ENCODE measurements at regions of chr16 and their contacts with region 1.

Region 1: DNA sequence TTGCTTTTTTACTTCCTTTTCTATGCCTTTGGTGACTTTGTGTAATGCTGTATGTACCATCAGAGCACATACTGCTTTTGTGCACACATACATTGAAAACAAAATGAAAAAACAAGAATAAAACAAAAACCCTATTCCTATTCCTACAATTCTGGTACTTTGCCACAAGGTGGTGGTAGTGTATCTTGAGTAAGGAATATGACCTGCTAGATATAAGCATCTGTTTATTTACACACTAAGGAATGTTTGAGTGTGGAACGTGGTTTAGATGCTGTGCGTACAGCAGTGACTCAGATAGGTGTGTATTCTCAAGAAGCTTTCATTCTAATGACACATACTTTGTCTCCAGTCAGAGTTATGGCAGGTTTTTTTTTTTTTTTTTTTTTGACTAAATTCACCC is 606.2 kb downstream of the WWOX start:
- DNase-seq: no peak
- ATAC-seq: no peak
- H3K4me3 Mint-ChIP-seq: no peak overlapping the region
- H3K27ac Mint-ChIP-seq: no peak overlapping the region
- H3K4me1 Mint-ChIP-seq: no peaks in the 10 kb centered on the region
- H3K27me3 Mint-ChIP-seq: no peaks in the 10 kb centered on the region

Region 2: DNA sequence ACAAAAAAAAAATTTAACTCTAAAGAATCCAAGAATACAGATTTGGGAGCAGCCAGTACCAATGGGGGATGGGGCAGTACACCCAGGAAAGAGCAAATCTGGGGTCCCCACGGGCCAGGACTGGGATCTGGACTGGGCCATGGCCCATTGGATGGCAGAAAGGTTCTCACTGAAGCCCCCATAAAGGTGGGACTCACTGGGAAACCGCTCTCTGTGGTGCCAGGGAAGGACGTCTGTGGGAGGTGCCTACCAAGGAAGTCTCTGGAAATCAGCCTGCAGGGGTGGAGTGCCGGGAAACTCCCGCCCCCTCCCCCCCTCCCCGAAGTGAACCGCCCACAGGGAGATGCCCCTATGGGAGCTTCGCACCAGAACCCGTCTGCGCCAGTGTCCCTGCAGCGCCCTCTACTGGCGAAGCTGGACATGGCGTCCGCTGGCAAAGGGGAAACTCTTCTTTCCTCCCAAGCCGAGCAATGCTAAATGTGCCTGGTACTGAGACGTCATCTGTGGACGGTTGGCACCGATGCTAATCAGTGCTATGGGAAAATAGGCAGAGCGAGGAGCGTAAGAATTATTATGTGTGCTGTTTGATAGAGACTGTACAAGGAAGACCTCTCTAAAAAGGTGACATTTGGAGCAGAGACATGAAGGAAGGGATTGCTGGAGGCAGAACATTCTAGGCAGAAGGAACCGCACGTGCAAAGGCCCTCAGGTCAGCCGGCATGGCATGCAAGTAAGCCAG is 64.8 kb after region 1 on chr16:
- CTCF ChIA-PET with region 1: interaction called, 22 read pairs
- POLR2A ChIA-PET with region 1: no interaction called
- DNase-seq: peak; percentile 77
- ATAC-seq: peak; percentile 78
- H3K4me3 Mint-ChIP-seq: no peak overlapping the region
- H3K27ac Mint-ChIP-seq: no peak overlapping the region
- H3K4me1 Mint-ChIP-seq: peaks cover 10% of the 10 kb centered on the region
- H3K27me3 Mint-ChIP-seq: no peaks in the 10 kb centered on the region

Measured in activated CD8-positive, alpha-beta T cell treated with anti-CD3 and anti-CD28 coated beads, Interleukin-2, amount 10 ng/mL, durations not matched to agents 7 days and 5 days (primary cell).